Ascending aorta (tissue), 2 donors: ENCODE measurements at regions of chr6 and their contacts with region 1.

Region 1: GRCh38 chr6:37018198-37019064 is 13.0 kb downstream of the FGD2 start:
- DNase-seq: peak; percentile 64 to 95
- H3K4me3 ChIP-seq: no peak overlapping the region
- H3K27ac ChIP-seq: peak overlapping the region; percentile 32 to 63
- H3K4me1 ChIP-seq: peaks cover 0 to 2% of the 10 kb centered on the region in 2 donors
- H3K27me3 ChIP-seq: no peaks in the 10 kb centered on the region
- CTCF ChIP-seq: peak; percentile 83 to 91 (median 86)

Region 2: DNA sequence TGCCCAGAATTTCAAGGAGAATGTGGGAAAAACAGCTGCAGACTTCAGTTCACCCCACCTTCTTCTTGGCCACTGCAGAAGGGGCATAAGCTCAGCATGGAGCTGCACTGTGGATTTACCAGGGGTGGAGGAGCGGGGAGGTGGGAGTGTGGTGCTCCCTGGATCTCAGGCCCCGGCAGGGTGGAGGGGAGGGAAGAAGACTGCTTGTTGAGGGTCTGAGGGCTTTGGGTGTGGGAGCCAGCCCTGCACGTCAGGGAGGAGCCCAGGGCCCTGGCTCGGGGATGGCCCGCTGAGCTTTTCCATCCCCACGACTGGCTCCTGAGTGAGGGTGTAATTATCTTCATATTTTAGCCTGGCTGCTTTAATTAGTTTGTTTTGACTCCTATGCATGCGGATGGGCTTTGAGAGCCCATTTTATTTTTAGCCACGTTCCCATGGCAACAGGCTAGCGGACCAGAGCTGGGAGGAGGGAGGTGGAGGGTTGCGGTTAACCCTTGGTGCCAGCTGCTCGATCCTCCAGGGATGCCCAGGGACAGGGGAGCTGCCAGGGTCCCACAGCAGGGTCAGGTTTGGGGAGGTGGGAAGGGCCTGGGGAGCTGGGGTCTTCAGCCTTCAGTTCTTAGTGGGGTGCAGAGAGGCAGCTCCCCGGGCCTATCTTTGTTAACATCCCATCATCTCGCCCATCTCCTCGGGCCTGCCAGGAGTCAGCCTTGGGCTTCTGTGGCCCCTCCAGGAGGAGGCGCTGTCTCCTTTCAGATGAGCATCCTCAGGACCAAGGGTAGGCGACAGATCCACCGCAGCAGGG is 252.6 kb before region 1 on chr6:
- intact Hi-C with region 1: loop called (anchors 1 kb)
- DNase-seq: peak; percentile 33 to 89
- H3K4me3 ChIP-seq: no peak overlapping the region
- H3K27ac ChIP-seq: no peak overlapping the region
- H3K4me1 ChIP-seq: peaks cover 0 to 8% of the 10 kb centered on the region in 2 donors
- H3K27me3 ChIP-seq: no peaks in the 10 kb centered on the region
- CTCF ChIP-seq: peak; percentile 63 to 85 (median 82)

Region 3: DNA sequence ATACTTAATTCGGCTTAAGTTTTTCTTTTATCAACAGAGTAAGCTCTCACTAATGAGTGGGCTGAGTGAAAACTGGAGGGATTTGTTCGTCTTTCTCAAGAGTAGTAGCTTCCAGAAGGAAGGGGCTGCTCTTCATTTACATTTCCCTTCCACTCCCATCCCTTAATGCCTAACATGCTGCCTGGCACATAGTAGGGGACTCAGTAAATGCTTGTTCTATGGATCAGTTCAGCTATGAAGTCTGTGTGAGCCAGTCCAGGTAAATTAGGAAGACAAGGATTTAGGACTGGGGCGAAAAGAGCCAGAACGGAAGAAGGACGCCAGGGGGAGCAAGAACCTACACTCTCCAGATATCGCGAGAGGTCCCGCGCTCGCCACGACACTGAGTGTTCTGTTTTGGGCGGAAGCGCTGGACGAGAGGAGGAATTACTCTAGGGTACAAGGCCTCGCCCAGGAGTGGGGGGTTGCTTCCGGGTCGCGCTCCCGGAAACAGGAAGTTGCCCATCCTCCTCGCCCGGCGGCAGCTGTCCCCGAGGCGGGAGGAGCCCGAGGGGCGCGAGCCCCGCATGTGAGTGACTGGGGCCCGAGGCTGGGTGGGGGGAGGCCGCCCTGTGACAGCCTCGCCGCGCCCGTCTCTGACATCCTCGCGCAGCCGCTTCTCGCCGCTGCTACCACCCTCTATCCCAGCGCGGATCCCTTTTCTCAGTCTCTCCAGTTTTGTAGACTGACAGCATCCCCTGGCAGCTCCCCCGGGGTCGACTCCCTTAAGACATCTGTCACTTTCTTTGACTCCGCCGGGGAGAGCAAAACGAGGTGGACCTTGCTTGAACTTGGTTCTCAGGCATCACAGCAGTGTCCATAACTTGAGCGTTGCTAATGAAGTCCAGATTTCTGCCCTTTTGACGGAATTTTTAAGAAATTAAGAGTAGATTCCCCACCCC is 132.7 kb before region 1 on chr6 and contains the start of gene C6orf89:
- intact Hi-C with region 1: loop called (anchors 1 kb)
- DNase-seq: peak; percentile 93 to 99
- H3K4me3 ChIP-seq: peak within 1 kb of the TSS; percentile 85 to 90
- H3K27ac ChIP-seq: peak within 1 kb of the TSS; percentile 89 to 91
- H3K4me1 ChIP-seq: peaks cover 0 to 14% of the 10 kb centered on the region in 2 donors
- H3K27me3 ChIP-seq: no peaks in the 10 kb centered on the region
- CTCF ChIP-seq: peak; percentile 76 to 93 (median 84)
- total RNA-seq, gene C6orf89: 21.6 TPM

Region 4: GRCh38 chr6:36979347-36979742 is 39.1 kb before region 1 on chr6:
- intact Hi-C with region 1: loop called (anchors 5 kb)
- DNase-seq: no peak
- H3K4me3 ChIP-seq: no peak overlapping the region
- H3K27ac ChIP-seq: no peak overlapping the region
- H3K4me1 ChIP-seq: peaks cover 6 to 29% of the 10 kb centered on the region in 2 donors
- H3K27me3 ChIP-seq: no peaks in the 10 kb centered on the region
- CTCF ChIP-seq: peak; percentile 25 to 63 (median 51)